ENCODE measurements at regions of chr2 and their contacts with region 1.

Region 1: GRCh38 chr2:246489-247144 is 17.2 kb downstream of the SH3YL1 start:
- DNase-seq: no peak
- H3K4me3 ChIP-seq: no peak overlapping the region
- H3K27ac ChIP-seq: no peak overlapping the region
- H3K4me1 ChIP-seq: no peaks in the 10 kb centered on the region
- H3K27me3 ChIP-seq: no peaks in the 10 kb centered on the region
- CTCF ChIP-seq: peak in 5 of 6 experiments; percentile 21 to 58 (median 37)
- POLR2A ChIP-seq: no peak

Region 2: GRCh38 chr2:305366-305765 is 58.7 kb after region 1 on chr2:
- intact Hi-C with region 1: no loop called
- DNase-seq: no peak
- H3K4me3 ChIP-seq: no peak overlapping the region
- H3K27ac ChIP-seq: no peak overlapping the region
- H3K4me1 ChIP-seq: no peaks in the 10 kb centered on the region
- H3K27me3 ChIP-seq: no peaks in the 10 kb centered on the region
- CTCF ChIP-seq: no peak
- POLR2A ChIP-seq: no peak

Region 3: DNA sequence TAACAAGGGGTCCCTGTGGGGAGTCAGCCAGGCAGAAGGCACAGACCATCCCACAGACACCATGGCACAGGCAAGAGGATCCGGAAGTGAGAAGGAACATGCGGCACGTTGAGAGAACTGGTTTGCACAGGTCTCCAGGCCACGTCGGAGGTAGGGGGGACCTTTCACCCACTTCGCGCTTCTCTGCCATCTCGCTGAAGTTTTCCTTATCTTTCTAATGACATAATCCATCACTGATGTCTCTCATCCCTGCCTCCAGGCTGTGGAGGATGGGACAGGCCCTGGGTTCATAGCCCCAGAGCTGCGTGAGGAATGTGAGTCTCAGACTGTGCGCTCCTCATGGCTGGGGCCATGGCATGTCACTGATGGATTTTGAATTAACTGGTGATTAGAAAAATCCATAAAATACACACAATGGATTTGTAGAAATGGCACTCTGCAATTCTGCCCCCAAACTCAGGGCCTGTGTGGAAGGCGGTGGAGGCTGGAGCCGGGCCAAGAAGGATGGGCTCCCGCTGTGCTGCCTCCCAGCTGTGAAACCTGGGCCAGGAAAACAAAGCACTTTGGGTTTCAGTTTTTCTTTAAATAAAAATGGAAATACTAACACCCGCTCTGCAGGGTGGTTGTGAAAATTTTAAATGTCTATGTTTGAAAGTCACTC is 154.5 kb after region 1 on chr2:
- intact Hi-C with region 1: no loop called
- DNase-seq: no peak
- H3K4me3 ChIP-seq: no peak overlapping the region
- H3K27ac ChIP-seq: no peak overlapping the region
- H3K4me1 ChIP-seq: no peaks in the 10 kb centered on the region
- H3K27me3 ChIP-seq: no peaks in the 10 kb centered on the region
- CTCF ChIP-seq: no peak
- POLR2A ChIP-seq: no peak

Region 4: GRCh38 chr2:648476-649424 is 402.1 kb after region 1 on chr2:
- intact Hi-C with region 1: loop called (anchors 10 kb)
- DNase-seq: no peak
- H3K4me3 ChIP-seq: no peak overlapping the region
- H3K27ac ChIP-seq: no peak overlapping the region
- H3K4me1 ChIP-seq: no peaks in the 10 kb centered on the region
- H3K27me3 ChIP-seq: peaks cover 0 to 46% (median 0%) of the 10 kb centered on the region in 4 donors
- CTCF ChIP-seq: no peak
- POLR2A ChIP-seq: no peak

Measured in esophagus squamous epithelium (tissue), 5 donors.